Caco-2 (cell line): ENCODE measurements at regions of chr2 and their contacts with region 1.

Region 1: DNA sequence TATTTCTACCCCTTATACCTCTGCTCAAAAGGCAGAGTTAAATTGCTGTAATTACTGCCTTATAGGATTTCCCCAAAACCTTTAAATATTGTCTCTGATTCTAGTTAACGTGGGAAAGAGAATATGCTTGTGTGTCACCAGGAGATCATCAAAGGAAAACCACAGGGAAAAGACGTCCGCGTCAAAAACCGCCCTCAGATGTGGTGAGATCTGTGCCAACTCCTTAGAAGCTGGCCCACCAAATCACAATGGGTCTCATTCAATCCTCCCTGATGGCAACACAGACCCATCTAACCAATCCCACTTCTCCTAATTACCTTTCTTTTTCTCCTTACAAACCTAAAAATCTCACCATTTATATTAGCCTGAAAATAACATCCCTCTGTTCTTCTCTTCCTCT is 25.4 kb downstream of the VPS54 start:
- DNase-seq: no peak
- H3K4me3 ChIP-seq: no peak overlapping the region
- H3K4me3 Mint-ChIP-seq: peak overlapping the region; percentile 45
- H3K27ac Mint-ChIP-seq: peak overlapping the region; percentile 91
- H3K4me1 ChIP-seq: peaks cover 29% of the 10 kb centered on the region
- H3K4me1 Mint-ChIP-seq: peaks cover 63% of the 10 kb centered on the region
- H3K27me3 ChIP-seq: no peaks in the 10 kb centered on the region
- H3K27me3 Mint-ChIP-seq: no peaks in the 10 kb centered on the region
- CTCF ChIP-seq: no peak

Region 2: GRCh38 chr2:64018923-64019718 is 25.2 kb after region 1 on chr2 and contains the start of gene VPS54:
- CTCF ChIA-PET with region 1: no interaction called
- POLR2A ChIA-PET with region 1: no interaction called
- intact Hi-C with region 1: loop called (anchors 2 kb)
- DNase-seq: peak; percentile 73 to 86
- H3K4me3 ChIP-seq: peak within 1 kb of the TSS; percentile 88
- H3K4me3 Mint-ChIP-seq: peak within 1 kb of the TSS; percentile 100
- H3K27ac Mint-ChIP-seq: peak within 1 kb of the TSS; percentile 96
- H3K4me1 ChIP-seq: peaks cover 29% of the 10 kb centered on the region
- H3K4me1 Mint-ChIP-seq: peaks cover 9% of the 10 kb centered on the region
- H3K27me3 ChIP-seq: no peaks in the 10 kb centered on the region
- H3K27me3 Mint-ChIP-seq: no peaks in the 10 kb centered on the region
- CTCF ChIP-seq: no peak
- total RNA-seq, gene VPS54: 27.9 and 28.5 TPM in 2 replicates